GM13976 (cell line): ENCODE measurements at regions of chrX and their contacts with region 1.

Region 1: DNA sequence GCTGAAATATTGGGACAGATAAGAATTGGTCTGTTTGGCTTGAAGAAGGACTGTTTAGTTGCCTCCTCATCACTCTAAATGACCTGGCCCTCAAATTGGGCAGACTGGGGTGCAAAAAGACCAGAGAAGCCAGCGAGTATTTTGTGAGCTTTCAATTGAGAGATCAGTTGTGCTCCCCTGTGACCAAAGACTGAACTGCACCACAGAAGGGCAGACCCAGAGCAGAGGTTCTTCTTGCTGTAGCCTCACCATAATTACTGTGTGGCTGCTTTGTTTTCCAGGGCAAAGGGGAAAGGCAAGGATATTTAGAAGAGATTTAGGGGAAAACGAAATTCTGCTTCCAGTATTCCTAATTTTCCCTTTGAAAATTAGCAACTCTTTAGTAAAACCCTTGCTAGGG is 104.0 kb upstream of the MBNL3 start:
- DNase-seq: no peak
- CTCF ChIP-seq: peak; percentile 14

Region 2: GRCh38 chrX:132292793-132293192 is 300.1 kb before region 1 on chrX:
- in situ Hi-C with region 1: loop called (anchors 10 kb)
- DNase-seq: peak; percentile 55
- CTCF ChIP-seq: peak; percentile 51

Region 3: DNA sequence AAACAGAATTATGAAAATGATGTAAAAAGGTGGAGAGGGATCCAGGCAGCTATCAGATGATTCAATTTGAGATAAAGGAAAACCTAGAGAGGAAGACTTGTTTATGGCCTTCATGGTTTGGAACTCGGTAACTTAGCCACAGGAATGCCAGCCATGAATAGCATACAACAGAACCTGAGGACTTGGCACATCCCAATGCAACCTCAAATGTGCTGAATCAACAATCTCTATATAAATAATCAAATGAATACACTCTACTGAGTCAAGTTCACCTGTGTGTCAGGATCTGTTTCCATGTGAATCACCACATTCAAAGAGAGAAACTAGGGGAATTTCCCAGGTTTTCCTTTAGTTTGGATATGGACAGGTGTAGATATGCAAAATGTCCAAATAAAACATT is 190.9 kb before region 1 on chrX:
- in situ Hi-C with region 1: no loop called
- DNase-seq: no peak
- CTCF ChIP-seq: no peak